Left ventricle myocardium superior (tissue), 1 donor: ENCODE measurements at regions of chr10 and their contacts with region 1.

Region 1: GRCh38 chr10:113385021-113385999 is 167.5 kb upstream of the HABP2 start:
- DNase-seq: peak; percentile 88
- ATAC-seq: peak; percentile 98

Region 2: DNA sequence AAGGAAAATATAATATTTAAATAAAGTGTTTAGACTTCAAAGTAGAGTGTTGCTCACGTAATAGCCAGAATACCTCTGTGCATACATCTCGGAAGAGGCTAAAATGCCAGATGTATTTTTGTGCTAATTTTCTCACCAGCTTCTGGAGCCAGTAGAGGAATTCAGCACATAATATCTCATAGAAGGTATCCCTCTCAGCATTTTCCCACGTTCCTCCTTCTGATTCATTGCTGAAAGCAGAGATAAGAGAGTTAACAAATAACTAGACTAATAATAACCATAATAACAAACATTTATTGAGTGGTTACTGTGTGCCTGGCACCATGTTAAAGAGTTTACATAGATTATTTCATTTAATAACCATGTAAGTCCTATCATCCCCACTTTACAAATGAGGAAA is 814.7 kb before region 1 on chr10:
- intact Hi-C with region 1: loop called (anchors 10 kb)
- DNase-seq: no peak
- ATAC-seq: no peak

Region 3: GRCh38 chr10:112721080-112721698 is 664.1 kb before region 1 on chr10:
- intact Hi-C with region 1: loop called (anchors 10 kb)
- DNase-seq: no peak
- ATAC-seq: peak; percentile 57

Region 4: GRCh38 chr10:113309791-113310190 is 75.5 kb before region 1 on chr10:
- intact Hi-C with region 1: no loop called
- DNase-seq: no peak
- ATAC-seq: no peak

Region 5: DNA sequence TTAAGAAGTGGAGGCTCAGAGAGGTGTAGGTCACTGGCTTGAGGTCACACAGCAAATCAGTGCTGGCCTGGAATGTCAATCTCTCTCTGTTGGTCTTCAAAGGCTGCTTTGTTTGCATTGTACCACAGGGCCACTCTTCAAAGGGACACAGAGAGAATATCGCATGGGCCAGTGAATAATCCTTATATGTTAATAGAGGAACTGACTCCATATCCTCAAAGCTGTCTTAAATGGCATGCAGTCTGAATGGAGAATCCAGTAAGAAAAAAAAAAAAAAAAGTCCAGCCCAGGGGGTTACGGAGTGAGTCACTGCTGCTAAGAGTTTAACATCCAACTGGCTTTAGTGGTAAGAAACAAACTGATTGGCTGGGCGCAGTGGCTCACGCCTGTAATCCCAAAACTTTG is 224.4 kb after region 1 on chr10:
- intact Hi-C with region 1: no loop called
- DNase-seq: no peak
- ATAC-seq: no peak